Endothelial cell of umbilical vein (primary cell): ENCODE measurements at regions of chr6 and their contacts with region 1.

Region 1: DNA sequence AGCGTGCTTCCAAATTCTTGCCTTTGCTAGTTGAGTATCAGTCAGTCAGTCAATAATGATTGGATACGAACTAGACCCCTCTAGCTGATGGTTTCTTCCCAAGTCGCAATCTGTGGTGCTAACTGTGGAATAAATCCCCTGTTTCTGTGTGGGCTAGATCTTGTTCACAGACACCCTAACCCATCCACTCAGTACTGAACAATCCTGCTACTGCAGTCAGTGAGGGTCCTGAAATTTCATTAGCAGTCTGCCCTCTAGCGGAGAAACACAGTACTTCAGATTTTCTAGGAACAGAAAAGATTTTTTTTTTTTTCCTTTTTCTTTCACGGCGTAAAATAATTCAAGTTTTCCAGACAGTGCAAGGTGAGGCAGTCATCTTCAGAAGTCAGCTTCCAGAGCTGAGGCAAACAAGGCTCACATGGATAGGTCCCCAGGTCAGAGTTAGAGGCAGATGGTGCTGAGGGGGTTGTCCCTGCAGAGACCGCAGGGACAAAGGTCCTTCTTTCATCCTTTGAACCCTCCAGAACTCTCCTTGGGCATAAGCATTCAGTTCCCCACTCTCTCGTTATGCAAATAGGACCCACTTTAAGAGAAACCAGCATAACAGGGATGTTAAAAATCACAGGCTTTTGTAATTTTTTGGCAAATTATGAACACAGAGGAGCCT is 119.6 kb downstream of the SCML4 start:
- DNase-seq: peak; percentile 58
- H3K4me3 ChIP-seq: no peak overlapping the region
- H3K27ac ChIP-seq: no peak overlapping the region
- H3K4me1 ChIP-seq: no peaks in the 10 kb centered on the region
- H3K27me3 ChIP-seq: peaks cover 10 to 14% of the 10 kb centered on the region in 2 experiments
- CTCF ChIP-seq: peak; percentile 60 to 68
- POLR2A ChIP-seq: no peak

Region 2: GRCh38 chr6:107132330-107132954 is 572.0 kb before region 1 on chr6:
- CTCF ChIA-PET with region 1: no interaction called
- POLR2A ChIA-PET with region 1: no interaction called
- dilution Hi-C with region 1: no loop called
- intact Hi-C with region 1: loop called (anchors 1 kb)
- DNase-seq: peak; percentile 32
- H3K4me3 ChIP-seq: no peak overlapping the region
- H3K27ac ChIP-seq: no peak overlapping the region
- H3K4me1 ChIP-seq: peaks cover 6% of the 10 kb centered on the region
- H3K27me3 ChIP-seq: no peaks in the 10 kb centered on the region
- CTCF ChIP-seq: peak; percentile 38 to 46
- POLR2A ChIP-seq: no peak

Region 3: GRCh38 chr6:107179004-107179403 is 525.5 kb before region 1 on chr6:
- CTCF ChIA-PET with region 1: interaction called, 10 read pairs
- POLR2A ChIA-PET with region 1: no interaction called
- dilution Hi-C with region 1: no loop called
- intact Hi-C with region 1: loop called (anchors 1 kb)
- DNase-seq: peak; percentile 30
- H3K4me3 ChIP-seq: no peak overlapping the region
- H3K27ac ChIP-seq: no peak overlapping the region
- H3K4me1 ChIP-seq: no peaks in the 10 kb centered on the region
- H3K27me3 ChIP-seq: no peaks in the 10 kb centered on the region
- CTCF ChIP-seq: peak; percentile 10 to 25
- POLR2A ChIP-seq: no peak

Region 4: GRCh38 chr6:107674995-107675738 is 29.3 kb before region 1 on chr6:
- CTCF ChIA-PET with region 1: interaction called, 5 read pairs
- POLR2A ChIA-PET with region 1: no interaction called
- dilution Hi-C with region 1: no loop called
- intact Hi-C with region 1: loop called (anchors 1 kb)
- DNase-seq: peak; percentile 81
- H3K4me3 ChIP-seq: no peak overlapping the region
- H3K27ac ChIP-seq: no peak overlapping the region
- H3K4me1 ChIP-seq: peaks cover 13% of the 10 kb centered on the region
- H3K27me3 ChIP-seq: peaks cover 8 to 14% of the 10 kb centered on the region in 2 experiments
- CTCF ChIP-seq: peak; percentile 83 to 87
- POLR2A ChIP-seq: no peak

Region 5: DNA sequence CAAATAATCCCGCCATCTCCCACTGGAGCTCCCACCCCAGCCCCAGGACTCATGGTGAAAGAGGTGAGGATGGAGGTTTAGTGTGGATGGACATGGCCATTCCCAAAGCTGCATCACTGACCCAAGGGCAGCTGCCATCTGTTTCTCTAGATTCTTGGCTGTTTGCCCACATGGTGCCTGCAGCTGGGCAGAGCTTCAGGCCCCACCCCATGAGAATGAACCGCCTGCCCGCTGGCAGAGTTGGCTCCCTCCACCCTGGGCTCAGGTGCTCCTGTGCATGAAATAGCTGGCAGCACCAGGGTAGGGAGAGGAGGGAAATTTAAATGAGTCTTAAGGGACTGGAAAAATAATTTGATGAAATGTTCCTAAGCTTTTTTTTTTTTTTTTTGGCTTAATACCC is 102.2 kb after region 1 on chr6:
- CTCF ChIA-PET with region 1: no interaction called
- POLR2A ChIA-PET with region 1: no interaction called
- dilution Hi-C with region 1: no loop called
- intact Hi-C with region 1: no loop called
- DNase-seq: no peak
- H3K4me3 ChIP-seq: no peak overlapping the region
- H3K27ac ChIP-seq: no peak overlapping the region
- H3K4me1 ChIP-seq: no peaks in the 10 kb centered on the region
- H3K27me3 ChIP-seq: peaks cover 7 to 8% of the 10 kb centered on the region in 2 experiments
- CTCF ChIP-seq: no peak
- POLR2A ChIP-seq: no peak